Calu3 (cell line): ENCODE measurements at regions of chr2 and their contacts with region 1.

Region 1: DNA sequence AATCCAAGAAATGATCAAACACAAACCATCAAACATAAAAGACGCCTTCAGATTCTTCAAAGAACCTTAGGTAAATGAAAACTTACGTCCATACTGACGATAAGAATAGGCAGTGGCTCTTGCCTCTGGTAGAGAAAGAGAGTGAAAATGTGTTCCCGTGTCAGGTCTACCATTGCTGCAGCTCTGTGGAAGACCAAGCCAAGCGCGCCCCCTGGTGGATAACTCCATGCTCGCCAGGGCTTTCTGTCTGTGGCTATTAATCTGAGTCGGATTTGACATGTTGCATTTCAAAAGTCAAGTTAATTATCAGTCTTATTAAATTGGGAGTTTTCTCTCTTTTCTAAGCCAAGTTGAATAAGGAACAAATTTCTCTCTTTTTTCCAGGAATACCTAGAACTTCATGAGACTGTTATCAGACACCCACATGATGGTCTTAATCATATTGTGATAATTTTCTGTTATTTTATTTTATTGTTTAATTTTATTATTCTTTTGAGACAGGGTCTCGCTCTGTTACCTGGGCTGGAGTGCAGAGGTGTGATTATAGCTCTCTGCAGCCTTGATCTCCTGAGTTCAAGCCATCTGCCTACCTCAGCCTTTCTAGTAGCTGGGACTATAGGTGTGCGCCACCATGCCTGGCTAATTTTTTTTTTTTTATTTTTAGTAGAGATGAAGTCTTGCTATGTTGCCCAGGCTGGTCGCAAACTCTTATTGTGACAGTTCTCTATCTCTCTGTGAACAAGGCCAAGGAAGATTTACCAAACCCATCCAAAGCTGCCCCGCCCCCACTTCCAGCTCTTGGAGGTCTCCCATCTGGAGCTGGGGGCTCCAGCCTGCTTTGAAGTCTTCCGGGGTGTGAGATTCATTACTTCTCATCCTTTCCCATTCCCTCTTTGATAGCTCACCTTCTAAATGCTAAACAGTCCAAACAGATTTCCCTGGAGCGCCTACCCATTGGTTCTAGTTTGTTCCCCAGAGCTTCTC is 15.8 kb upstream of the ZAP70 start:
- DNase-seq: peak; percentile 90
- H3K4me3 Mint-ChIP-seq: no peak overlapping the region
- H3K27ac Mint-ChIP-seq: no peak overlapping the region
- H3K4me1 Mint-ChIP-seq: peaks cover 8% of the 10 kb centered on the region
- H3K27me3 Mint-ChIP-seq: peaks cover 38% of the 10 kb centered on the region
- CTCF ChIP-seq: peak; percentile 87

Region 2: DNA sequence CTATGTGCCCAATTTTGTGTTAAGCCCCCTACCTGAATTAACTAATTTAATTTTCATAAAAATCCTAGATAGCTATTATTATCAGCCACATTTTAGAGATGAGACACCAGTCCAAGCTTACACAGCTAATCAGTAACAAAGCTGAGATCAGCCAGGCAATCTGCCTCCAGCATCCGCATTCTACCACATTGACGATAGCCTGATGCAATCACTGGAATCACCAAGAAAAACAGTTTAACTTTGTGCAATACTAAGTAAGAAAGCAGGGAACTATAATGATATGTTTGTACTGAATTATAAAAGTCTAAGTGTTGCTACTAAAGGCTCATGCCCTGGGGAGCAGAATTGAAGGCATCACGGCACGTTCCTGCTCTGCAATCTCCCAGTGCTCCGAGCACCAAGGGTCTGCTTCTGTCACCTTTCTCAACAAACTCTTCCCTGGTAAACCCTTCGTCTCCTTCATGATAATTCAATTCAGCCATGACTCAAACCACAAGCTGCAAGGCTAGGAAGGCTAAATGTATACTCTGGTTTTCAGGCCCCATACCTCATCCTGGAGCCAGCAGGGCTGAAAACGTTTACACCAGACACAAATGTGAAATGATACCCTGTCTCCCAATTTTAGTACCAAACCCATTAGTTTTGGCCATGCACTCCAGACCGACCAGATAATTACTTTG is 1078.8 kb before region 1 on chr2:
- CTCF ChIA-PET with region 1: no interaction called
- intact Hi-C with region 1: no loop called
- DNase-seq: no peak
- H3K4me3 Mint-ChIP-seq: no peak overlapping the region
- H3K27ac Mint-ChIP-seq: no peak overlapping the region
- H3K4me1 Mint-ChIP-seq: no peaks in the 10 kb centered on the region
- H3K27me3 Mint-ChIP-seq: no peaks in the 10 kb centered on the region
- CTCF ChIP-seq: no peak

Region 3: DNA sequence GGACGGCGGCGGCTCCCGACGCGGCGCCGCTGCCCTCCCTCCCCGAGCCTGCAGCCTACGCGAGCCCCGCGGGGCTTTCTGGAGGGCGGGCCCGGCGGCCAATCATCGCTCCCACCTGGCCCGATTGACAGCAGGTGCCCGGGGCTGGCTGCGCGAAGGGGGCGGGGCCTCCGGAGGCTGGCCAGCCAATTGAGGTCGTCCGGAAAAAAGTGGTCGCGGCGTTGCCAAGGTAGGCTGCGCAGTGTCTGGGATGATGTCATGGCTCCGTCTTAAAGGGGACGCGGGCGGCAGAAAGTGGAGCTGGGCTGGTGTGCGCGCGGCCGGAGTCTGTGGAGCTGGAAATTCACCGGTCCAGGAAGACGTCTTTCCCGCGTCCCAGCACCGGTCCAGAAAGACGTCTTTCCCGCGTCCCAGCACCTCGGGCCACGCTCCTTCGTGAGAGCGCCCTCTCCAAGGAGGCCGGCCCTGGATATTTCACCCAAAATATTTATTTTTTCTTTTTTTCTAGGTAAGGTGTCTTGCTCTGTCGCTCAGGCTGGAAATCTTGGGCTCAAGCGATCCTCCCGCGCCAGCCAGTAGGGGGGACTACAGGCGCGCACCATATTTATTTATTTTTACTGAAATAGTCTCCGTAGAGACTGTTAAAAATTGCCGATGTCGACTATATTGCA is 33.4 kb before region 1 on chr2 and contains the start of gene ACTR1B:
- CTCF ChIA-PET with region 1: interaction called, 21 read pairs
- intact Hi-C with region 1: loop called (anchors 2 kb)
- DNase-seq: peak; percentile 99
- H3K4me3 Mint-ChIP-seq: peak within 1 kb of the TSS; percentile 89
- H3K27ac Mint-ChIP-seq: peak within 1 kb of the TSS; percentile 97
- H3K4me1 Mint-ChIP-seq: no peaks in the 10 kb centered on the region
- H3K27me3 Mint-ChIP-seq: no peaks in the 10 kb centered on the region
- CTCF ChIP-seq: peak; percentile 54
- total RNA-seq, gene ACTR1B: 48.7 and 49.1 TPM in 2 replicates

Region 4: DNA sequence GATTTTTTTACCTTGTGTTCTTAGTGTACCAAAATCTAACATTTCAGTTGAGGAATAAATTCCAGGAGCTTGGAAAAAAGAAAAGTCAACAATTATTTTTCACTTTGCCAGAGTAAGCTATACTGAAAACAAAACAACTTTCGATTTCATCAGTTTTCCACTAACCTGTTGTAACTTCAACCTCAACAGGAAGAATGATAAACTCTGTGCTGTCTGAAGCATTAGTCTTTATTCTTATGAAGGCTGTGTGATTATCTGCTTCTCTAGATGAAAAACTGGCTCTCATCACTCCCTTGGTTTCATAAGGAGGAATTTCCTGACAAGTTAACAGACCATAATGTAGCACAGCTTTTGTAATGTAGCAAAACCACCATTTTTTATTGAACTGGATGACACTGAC is 137.1 kb after region 1 on chr2:
- CTCF ChIA-PET with region 1: no interaction called
- intact Hi-C with region 1: no loop called
- DNase-seq: no peak
- H3K4me3 Mint-ChIP-seq: no peak overlapping the region
- H3K27ac Mint-ChIP-seq: no peak overlapping the region
- H3K4me1 Mint-ChIP-seq: no peaks in the 10 kb centered on the region
- H3K27me3 Mint-ChIP-seq: no peaks in the 10 kb centered on the region
- CTCF ChIP-seq: no peak

Region 5: GRCh38 chr2:98188351-98189049 is 491.0 kb after region 1 on chr2:
- CTCF ChIA-PET with region 1: interaction called, 9 read pairs
- intact Hi-C with region 1: loop called (anchors 5 kb)
- DNase-seq: peak; percentile 39
- H3K4me3 Mint-ChIP-seq: no peak overlapping the region
- H3K27ac Mint-ChIP-seq: no peak overlapping the region
- H3K4me1 Mint-ChIP-seq: no peaks in the 10 kb centered on the region
- H3K27me3 Mint-ChIP-seq: no peaks in the 10 kb centered on the region
- CTCF ChIP-seq: no peak

Region 6: DNA sequence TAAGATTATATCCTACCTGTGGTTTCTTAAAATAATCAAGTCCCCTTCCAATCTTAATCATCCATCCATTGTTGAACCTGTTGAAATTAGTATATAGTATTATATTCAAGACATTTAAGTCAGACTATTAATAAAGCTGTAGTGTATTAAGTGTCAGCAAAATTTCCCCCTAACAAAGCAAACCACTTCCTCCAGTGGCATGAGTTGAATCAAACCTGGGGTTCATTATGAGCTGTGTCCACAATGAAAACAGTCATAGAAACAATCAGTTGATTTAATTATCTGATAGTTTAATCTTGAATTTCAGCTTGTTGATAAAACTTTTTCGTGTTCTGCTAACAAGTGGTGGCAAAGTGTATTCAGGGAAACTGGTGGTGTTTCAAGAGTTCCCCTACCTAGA is 1472.0 kb after region 1 on chr2:
- CTCF ChIA-PET with region 1: no interaction called
- intact Hi-C with region 1: no loop called
- DNase-seq: no peak
- H3K4me3 Mint-ChIP-seq: no peak overlapping the region
- H3K27ac Mint-ChIP-seq: no peak overlapping the region
- H3K4me1 Mint-ChIP-seq: no peaks in the 10 kb centered on the region
- H3K27me3 Mint-ChIP-seq: no peaks in the 10 kb centered on the region
- CTCF ChIP-seq: no peak